HepG2 (cell line): ENCODE measurements at regions of chr1 and their contacts with region 1.

Region 1: DNA sequence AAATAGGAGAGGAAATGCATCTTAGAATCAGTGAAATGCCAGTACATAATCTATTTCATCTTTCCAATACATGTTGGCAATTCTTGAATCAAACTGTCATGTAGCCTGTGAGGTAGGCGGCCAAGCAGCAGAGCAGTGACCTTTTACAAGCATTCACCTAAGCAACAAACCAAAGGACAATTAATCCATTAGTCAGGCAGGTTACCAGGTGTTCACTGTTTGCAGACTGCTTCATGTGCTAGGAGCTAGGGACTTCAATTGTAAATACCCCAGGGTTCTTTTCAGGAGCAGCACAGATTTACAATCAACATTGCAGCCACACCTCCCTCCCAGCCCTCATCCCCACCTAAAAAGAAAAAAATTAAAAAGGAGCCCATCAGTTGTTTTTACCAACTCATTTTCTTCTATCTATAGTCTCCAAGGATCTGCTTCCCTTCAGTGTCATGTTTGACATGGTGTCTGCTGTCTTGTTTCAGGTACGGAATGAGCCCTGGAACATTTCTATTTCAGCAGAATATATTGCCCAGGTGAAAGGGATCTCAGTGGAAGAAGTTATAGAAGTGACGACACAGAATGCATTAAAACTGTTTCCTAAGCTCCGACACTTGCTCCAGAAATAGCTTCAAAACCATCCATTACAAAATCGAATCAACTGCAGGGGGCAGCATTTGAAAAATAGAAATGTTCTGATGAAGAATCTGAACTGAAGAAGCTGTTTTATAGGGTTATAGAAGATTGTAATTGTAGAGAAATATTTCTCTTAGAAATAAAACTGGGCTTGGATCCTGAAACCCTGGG is 23.0 kb downstream of the TATDN3 start:
- DNase-seq: peak; percentile 25
- ATAC-seq: no peak
- H3K4me3 ChIP-seq: no peak overlapping the region
- H3K27ac ChIP-seq: no peak overlapping the region
- H3K4me1 ChIP-seq: peaks cover 41% of the 10 kb centered on the region
- H3K27me3 ChIP-seq: no peaks in the 10 kb centered on the region
- CTCF ChIP-seq: peak; percentile 44
- EP300 ChIP-seq: no peak
- POLR2A ChIP-seq: no peak
- RAD21 ChIP-seq: no peak

Region 2: DNA sequence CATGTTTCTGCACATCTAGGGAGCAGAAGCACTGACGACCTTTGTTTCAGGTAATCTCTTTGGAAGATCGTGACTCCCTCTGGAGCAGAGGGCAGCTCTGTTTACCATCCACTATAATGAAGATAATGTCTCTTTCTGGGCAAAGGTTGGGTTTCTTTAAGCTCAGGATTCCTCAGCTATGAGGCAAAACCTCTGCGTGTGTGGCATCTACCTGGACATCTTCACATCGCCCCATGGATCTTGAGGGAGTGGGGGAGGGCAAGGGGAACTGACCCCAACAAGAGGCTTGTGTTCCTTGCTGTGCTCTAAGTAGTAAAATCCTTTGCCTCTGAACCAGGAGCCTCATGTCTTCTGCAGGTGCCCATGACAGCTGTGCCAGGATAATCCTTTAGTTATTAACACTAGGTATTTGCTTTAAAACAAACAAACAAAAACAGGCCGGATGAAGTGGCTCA is 13.1 kb after region 1 on chr1:
- CTCF ChIA-PET with region 1: no interaction called
- POLR2A ChIA-PET with region 1: interaction called, 32 read pairs
- in situ Hi-C with region 1: no loop called
- intact Hi-C with region 1: no loop called
- DNase-seq: peak; percentile 90
- ATAC-seq: peak; percentile 92
- H3K4me3 ChIP-seq: peak overlapping the region; percentile 32 to 64 (median 36); a peak in 5 of 6 replicates
- H3K27ac ChIP-seq: peak overlapping the region; percentile 98
- H3K4me1 ChIP-seq: peaks cover 48% of the 10 kb centered on the region
- H3K27me3 ChIP-seq: no peaks in the 10 kb centered on the region
- CTCF ChIP-seq: no peak
- EP300 ChIP-seq: peak in 1 of 2 experiments; percentile 86; a peak in 2 of 4 replicates
- POLR2A ChIP-seq: 0 out of 4 replicates have a peak, but pooled peaks of 1 of the 2 experiments have one; percentile 7
- RAD21 ChIP-seq: no peak

Region 3: GRCh38 chr1:212847549-212847948 is 32.8 kb after region 1 on chr1 and contains the start of gene SPATA45:
- CTCF ChIA-PET with region 1: no interaction called
- POLR2A ChIA-PET with region 1: no interaction called
- in situ Hi-C with region 1: no loop called
- intact Hi-C with region 1: no loop called
- DNase-seq: peak; percentile 32
- ATAC-seq: peak; percentile 48
- H3K4me3 ChIP-seq: no peak within 1 kb of the TSS
- H3K27ac ChIP-seq: no peak within 1 kb of the TSS
- H3K4me1 ChIP-seq: peaks cover 18% of the 10 kb centered on the region
- H3K27me3 ChIP-seq: no peaks in the 10 kb centered on the region
- CTCF ChIP-seq: no peak
- EP300 ChIP-seq: no peak
- POLR2A ChIP-seq: no peak
- RAD21 ChIP-seq: no peak
- total RNA-seq, gene SPATA45: 0.64 and 0.86 TPM in 2 replicates

Region 4: GRCh38 chr1:212915245-212916091 is 100.7 kb after region 1 on chr1:
- CTCF ChIA-PET with region 1: no interaction called
- POLR2A ChIA-PET with region 1: no interaction called
- in situ Hi-C with region 1: no loop called
- intact Hi-C with region 1: loop called (anchors 10 kb)
- DNase-seq: peak; percentile 50
- ATAC-seq: peak; percentile 78
- H3K4me3 ChIP-seq: 0 out of 6 replicates have a peak overlapping the region, but pooled peaks of 1 of the 3 experiments have one; percentile 52
- H3K27ac ChIP-seq: no peak overlapping the region
- H3K4me1 ChIP-seq: peaks cover 33% of the 10 kb centered on the region
- H3K27me3 ChIP-seq: peaks cover 0 to 14% of the 10 kb centered on the region in 2 experiments; a peak in 1 of 5 replicates
- CTCF ChIP-seq: peak; percentile 82
- EP300 ChIP-seq: no peak
- POLR2A ChIP-seq: no peak
- RAD21 ChIP-seq: no peak

Region 5: GRCh38 chr1:212990276-212990675 is 175.5 kb after region 1 on chr1:
- CTCF ChIA-PET with region 1: no interaction called
- POLR2A ChIA-PET with region 1: no interaction called
- in situ Hi-C with region 1: loop called (anchors 10 kb)
- intact Hi-C with region 1: loop called (anchors 10 kb)
- DNase-seq: no peak
- ATAC-seq: no peak
- H3K4me3 ChIP-seq: no peak overlapping the region
- H3K27ac ChIP-seq: no peak overlapping the region
- H3K4me1 ChIP-seq: peaks cover 7% of the 10 kb centered on the region; the same call in 1 of the 2 replicates
- H3K27me3 ChIP-seq: no peaks in the 10 kb centered on the region
- CTCF ChIP-seq: no peak
- EP300 ChIP-seq: no peak
- POLR2A ChIP-seq: no peak
- RAD21 ChIP-seq: no peak

Region 6: DNA sequence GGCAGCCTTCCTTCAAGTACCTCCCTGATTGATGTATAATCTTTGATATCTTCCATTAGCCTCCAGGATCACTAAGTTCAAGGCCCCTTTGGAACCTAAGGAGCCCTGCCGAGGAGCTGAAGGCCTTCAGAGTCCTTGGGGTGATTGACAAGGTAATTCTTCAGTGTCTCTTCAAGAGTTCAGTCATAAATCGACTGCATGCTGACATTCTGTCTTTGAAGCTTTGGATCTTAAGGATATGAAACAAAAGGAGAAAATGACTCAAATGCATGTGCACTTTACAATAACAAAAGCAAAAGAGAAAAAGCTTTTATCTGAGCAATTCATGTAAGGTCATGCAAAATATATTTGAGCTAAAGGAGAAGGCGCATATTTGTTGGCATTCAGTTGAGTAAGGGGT is 361.6 kb after region 1 on chr1:
- CTCF ChIA-PET with region 1: no interaction called
- POLR2A ChIA-PET with region 1: no interaction called
- in situ Hi-C with region 1: no loop called
- intact Hi-C with region 1: no loop called
- DNase-seq: no peak
- ATAC-seq: no peak
- H3K4me3 ChIP-seq: no peak overlapping the region
- H3K27ac ChIP-seq: no peak overlapping the region
- H3K4me1 ChIP-seq: no peaks in the 10 kb centered on the region
- H3K27me3 ChIP-seq: no peaks in the 10 kb centered on the region
- CTCF ChIP-seq: no peak
- EP300 ChIP-seq: no peak
- POLR2A ChIP-seq: no peak
- RAD21 ChIP-seq: no peak